ENCODE measurements at regions of chr6 and their contacts with region 1.

Region 1: GRCh38 chr6:108526739-108527174 is 34.0 kb upstream of the FOXO3 start:
- DNase-seq: no peak

Region 2: GRCh38 chr6:107284805-107285204 is 1242.0 kb before region 1 on chr6:
- intact Hi-C with region 1: loop called in 1 of 2 experiments (anchors 10 kb)
- DNase-seq: no peak

Region 3: DNA sequence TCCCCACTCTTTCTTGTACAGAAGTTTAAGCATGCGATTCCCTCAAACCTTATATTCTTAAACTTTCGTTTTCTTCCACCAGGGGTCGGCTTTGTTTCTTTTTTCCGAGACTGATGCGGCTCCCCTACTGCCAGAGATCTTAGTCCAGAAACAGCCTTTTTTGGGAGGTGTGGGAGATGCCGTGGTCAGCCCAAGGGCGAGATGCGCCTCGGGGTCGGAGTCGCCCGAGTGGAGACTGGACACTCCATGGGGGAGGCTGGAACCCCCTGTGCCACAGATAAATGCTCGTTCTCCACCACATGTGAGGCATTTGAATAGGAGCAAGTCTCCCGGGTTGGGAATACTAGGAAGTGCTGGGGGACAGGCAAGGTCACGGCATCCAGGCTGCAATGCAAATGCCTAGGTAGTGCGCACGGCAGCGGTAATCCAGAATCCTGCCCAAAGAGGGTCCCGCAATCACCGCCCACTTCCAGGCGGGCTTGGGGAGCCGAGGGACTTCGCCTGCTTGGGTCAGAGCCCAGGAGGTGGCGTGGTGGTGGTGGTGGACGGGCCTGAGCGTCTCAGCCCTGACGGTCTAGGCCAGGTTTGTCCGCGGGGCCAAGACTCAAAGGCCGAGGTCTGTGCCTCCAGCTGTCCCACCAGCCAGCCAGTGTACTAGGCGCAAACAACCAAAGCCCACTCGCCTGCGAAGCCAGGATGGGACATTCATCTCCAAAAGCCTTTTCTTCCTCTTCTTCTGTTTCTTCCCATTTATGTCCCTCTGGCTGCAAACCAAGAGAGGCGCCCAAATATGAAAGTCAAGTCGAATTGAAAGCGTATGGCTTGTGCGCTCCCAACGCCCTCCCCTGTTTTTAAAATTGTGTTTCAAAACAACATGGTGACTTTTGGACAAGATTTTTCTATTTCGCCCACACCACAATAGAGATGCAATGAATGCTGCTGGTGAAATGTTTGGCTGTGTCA is 412.9 kb before region 1 on chr6:
- intact Hi-C with region 1: loop called in 1 of 2 experiments (anchors 5 kb)
- DNase-seq: peak; percentile 75

Measured in posterior vena cava (tissue), 2 donors.